ENCODE measurements at regions of chr12 and their contacts with region 1.

Region 1: DNA sequence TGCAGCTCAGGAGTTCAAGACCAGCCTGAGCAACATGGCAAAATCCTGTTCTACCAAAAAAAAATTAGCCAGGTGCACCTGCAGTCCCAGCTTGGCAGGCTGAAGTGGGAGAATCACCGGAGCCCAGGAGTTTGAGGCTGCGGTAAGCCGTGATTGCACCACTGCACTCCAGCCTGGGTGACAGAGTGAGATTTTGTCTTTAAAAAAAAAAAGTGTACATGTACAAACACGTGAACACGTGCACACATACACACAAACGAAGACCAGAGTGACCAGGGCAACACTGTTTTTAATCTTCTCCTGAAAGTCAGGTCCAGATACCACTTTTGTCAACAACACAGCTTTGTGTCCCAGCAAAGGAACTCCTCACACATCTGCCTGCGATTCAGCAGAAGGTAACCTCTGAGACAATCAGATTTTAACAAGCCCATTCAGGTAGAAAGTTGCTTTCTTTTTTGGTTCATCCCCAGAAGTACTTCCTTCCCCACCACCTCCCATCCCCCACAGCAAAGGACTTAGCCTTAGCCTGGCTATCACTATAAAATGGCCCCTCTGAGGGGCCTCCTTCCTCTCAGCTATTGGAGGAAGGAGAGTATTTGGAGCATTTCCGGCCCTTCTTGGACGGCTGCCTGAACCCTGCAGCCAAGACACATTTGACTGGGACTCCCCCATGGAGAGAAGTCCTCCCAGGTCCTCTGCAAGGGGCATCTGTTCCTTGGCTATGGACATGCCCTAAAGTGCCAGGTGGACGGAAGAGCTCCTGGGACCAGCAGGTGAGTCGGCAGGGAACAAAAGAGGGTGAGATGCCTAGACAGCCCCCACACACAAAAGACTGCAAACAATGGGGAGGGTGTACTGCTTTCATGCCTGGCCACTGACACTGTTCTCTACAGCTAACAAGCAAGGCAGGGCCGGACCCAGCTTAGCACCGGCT is 9.8 kb downstream of the CTDSP2 start:
- DNase-seq: peak in 1 of 2 donors; percentile 93
- H3K4me3 ChIP-seq: no peak overlapping the region
- CTCF ChIP-seq: no peak
- POLR2A ChIP-seq: no peak

Region 2: GRCh38 chr12:57852620-57853500 is 16.2 kb after region 1 on chr12:
- intact Hi-C with region 1: no loop called
- DNase-seq: no peak
- H3K4me3 ChIP-seq: no peak overlapping the region
- CTCF ChIP-seq: no peak
- POLR2A ChIP-seq: no peak

Region 3: DNA sequence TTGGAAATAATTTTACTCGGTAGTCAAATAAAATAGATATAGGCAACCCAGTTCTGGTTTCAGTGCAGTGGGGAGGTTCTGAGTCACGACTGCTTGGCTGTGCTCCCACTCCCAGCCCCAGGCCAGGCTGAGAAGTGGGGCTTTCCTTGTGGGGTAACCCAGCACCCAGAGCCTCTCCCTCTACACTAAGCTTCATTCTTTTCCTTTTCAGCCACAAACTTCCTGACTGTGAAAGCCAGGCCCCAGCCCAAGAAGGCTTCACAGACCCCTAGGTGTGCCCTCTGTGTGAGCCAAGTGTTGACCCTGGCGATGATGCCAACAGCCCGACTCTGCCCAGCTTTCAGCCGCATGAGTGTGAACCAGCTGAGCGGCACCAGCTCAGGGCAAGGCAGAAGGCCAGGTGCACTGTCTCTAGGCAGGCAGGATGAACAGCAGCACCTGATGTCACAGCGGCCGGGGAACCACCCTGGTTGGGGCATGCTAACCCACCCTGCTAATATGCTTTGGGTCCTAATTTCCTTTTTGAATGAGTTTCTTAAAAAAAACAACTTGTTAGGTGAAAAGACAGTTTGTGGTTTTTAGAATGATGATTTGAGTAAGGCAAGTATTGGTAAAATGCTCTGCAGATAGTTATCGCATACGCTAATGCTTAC is 62.4 kb after region 1 on chr12:
- intact Hi-C with region 1: loop called (anchors 5 kb)
- DNase-seq: no peak
- H3K4me3 ChIP-seq: no peak overlapping the region
- CTCF ChIP-seq: no peak
- POLR2A ChIP-seq: no peak

Region 4: GRCh38 chr12:57998251-57998650 is 161.5 kb after region 1 on chr12:
- intact Hi-C with region 1: no loop called
- DNase-seq: no peak
- H3K4me3 ChIP-seq: no peak overlapping the region
- CTCF ChIP-seq: no peak
- POLR2A ChIP-seq: no peak